GM13976 (cell line): ENCODE measurements at regions of chr6 and their contacts with region 1.

Region 1: DNA sequence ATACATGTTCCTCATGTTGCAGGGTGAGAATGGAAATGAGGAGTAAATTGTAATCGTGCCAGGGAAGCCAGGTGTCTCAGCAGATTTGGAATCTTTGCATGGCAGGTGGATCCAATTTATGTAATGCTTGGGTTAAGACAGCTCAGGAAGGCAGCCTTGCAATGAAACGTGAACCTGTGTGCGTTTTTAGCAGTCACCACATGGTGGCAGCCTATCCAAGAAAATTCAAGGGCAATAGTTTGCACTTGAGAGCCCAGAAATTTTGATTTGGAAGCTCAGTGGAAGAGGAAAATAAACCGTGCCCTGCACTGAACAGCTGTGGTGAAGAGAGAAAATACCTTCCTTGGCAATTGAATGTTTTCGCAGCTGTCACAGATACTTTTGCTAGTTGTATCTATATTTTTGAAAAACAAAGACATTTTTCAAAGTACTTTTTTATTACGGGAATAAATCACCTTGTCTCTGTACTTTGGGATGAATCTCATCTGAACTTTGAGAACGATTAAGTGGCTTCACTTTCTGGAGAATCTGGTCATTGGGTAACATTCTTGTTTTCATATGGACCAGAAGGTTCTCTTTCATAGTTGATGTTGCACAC is 26.5 kb downstream of the MTHFD1L start:
- DNase-seq: peak; percentile 50
- CTCF ChIP-seq: peak; percentile 86

Region 2: DNA sequence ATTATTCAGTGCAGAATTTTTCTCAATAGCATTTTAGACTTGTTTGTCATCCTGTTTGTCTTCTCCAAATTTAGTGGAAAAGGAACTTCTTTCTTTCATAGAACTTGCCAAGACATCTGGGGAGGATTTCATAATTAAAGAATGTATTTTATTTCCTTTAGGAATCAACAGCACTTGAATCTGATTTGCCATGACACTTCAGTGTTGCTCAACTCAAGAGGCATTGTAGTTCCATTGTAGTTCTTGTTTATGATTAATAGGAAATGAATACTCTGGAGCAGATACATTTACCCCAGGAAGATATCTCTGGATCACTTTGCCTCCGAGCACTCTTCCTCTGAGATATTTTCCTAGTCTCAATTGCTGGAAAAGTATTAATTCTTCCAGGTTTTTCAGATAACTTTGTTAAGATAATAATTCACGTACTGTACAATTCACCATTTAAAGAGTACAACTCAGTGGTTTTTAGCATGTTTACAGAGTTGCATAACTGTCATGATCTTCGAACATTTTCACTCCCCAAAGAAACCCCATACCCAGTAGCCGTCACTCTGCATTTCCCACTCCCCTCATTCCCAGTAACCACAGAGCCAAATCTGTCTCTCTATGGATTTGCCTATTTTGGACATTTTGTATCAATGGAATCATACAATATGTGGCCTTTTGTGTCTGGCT is 377.5 kb after region 1 on chr6:
- in situ Hi-C with region 1: no loop called
- DNase-seq: no peak
- CTCF ChIP-seq: no peak

Region 3: DNA sequence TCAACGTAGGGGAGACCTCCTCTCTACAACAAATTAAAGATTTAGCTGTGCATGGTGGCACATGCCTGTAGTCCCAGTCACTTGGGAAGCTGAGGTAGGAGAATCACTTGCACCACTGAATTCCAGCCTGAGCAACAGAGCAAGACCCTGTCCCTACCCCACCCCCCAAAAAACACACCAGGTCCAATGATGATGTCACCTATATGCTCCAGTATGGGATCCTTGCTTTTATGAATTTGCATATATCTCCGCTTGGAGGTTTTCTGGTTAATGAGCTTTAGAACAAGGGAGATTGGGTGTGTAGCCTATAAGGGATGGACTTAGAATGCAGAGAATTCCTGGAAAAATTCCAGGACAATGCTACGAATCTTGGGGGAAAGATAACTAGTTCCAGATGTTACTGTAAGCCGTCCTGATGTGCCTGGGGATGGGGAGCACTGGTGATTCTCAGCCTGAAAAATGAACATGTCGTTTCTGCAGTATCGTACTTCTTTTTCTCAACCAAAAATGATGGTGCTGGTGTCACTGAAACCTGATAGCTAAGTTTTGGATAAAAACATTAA is 438.2 kb after region 1 on chr6:
- in situ Hi-C with region 1: loop called (anchors 10 kb)
- DNase-seq: no peak
- CTCF ChIP-seq: no peak